IMR-90 (cell line): ENCODE measurements at regions of chr13 and their contacts with region 1.

Region 1: DNA sequence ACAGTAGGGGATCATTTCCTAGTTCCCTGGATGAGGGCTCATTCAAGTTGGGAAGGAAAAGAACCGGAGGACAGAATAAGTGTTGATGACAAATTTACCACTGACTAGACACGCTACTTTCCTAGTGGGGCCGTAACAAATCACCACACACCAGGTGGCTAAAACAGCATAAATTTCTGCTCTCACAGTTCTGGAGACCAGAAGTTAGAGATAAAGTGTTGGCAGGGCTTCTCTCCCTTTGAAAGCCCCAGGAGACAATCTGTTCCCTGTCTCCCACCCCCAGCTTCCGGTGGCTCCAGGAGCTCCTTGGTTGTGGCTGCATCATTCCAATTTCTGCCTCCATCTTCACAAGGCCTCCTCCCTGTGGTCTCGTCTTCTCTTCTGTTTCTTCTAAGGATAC is 65.4 kb upstream of the ARGLU1 start:
- DNase-seq: no peak
- ATAC-seq: no peak
- H3K4me3 ChIP-seq: no peak overlapping the region
- H3K27ac ChIP-seq: no peak overlapping the region
- H3K4me1 ChIP-seq: no peaks in the 10 kb centered on the region
- H3K27me3 ChIP-seq: peaks cover 6% of the 10 kb centered on the region
- CTCF ChIP-seq: no peak
- POLR2A ChIP-seq: no peak
- RAD21 ChIP-seq: no peak

Region 2: DNA sequence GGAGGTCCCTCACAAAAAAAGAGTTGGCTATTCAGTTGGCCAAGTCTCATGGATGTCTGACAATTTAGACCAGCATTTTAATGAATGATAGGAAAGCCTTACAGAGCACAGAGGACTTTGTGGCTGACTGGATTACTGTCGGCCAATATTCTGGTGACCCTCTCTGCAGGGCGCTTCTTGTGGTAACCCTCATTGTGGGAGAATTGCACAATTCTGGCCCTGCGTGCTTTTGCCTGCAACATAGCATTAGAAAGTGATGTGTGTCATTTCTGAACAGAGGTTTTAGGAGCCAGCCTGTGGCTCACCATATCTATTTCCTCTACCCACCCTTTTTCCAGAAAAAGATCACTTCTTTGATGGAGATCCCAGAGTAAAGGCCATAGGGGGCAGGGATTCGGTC is 169.2 kb before region 1 on chr13:
- CTCF ChIA-PET with region 1: no interaction called
- POLR2A ChIA-PET with region 1: no interaction called
- dilution Hi-C with region 1: no loop called
- in situ Hi-C with region 1: no loop called
- intact Hi-C with region 1: no loop called
- DNase-seq: no peak
- ATAC-seq: no peak
- H3K4me3 ChIP-seq: no peak overlapping the region
- H3K27ac ChIP-seq: no peak overlapping the region
- H3K4me1 ChIP-seq: no peaks in the 10 kb centered on the region
- H3K27me3 ChIP-seq: peaks cover 2% of the 10 kb centered on the region; the same call in 1 of the 2 replicates
- CTCF ChIP-seq: no peak
- POLR2A ChIP-seq: no peak
- RAD21 ChIP-seq: no peak

Region 3: DNA sequence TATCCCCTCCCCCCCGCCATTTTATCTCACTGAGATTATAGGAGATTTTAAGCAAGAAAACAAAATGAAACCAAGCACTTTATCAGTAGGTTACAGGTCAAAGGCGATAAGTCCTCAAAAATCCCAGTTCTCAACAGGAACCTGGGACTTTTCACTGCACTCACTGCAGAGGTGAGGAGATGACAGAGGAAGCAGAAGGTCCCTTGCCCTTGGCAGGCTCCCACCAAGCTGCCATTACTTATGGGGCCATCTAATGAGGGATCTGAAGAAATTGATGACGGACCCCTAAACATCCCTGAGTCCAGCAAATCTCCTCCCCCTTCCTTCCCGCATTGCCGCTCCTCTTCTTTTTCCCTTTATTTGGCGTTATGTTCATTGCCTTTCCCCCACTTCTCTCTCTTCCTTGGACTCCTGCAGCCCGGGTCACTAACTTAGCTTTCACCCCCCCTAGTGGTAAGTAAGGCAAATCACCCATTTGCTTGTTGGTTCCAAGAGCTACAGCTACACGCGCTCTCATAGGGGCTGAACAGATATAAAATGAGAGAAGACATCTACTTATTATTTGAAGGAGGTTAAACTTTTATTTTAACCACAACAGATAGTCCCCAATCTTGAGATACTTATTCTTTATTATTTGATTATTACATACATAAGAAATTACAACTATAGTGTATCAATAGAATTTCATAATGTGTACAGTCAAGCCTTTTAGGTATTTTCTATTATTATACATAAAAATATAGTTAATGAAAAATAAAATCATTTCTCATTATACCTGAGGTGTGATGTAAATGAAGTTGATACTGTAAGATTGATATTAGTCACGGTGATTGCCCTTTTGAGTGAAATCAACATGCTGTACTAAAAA is 13.4 kb before region 1 on chr13:
- CTCF ChIA-PET with region 1: interaction called, 11 read pairs
- POLR2A ChIA-PET with region 1: interaction called, 5 read pairs
- dilution Hi-C with region 1: no loop called
- in situ Hi-C with region 1: no loop called
- intact Hi-C with region 1: no loop called
- DNase-seq: peak; percentile 69
- ATAC-seq: peak; percentile 98
- H3K4me3 ChIP-seq: no peak overlapping the region
- H3K27ac ChIP-seq: no peak overlapping the region
- H3K4me1 ChIP-seq: no peaks in the 10 kb centered on the region
- H3K27me3 ChIP-seq: peaks cover 21% of the 10 kb centered on the region
- CTCF ChIP-seq: peak; percentile 82
- POLR2A ChIP-seq: no peak
- RAD21 ChIP-seq: peak; percentile 75

Region 4: DNA sequence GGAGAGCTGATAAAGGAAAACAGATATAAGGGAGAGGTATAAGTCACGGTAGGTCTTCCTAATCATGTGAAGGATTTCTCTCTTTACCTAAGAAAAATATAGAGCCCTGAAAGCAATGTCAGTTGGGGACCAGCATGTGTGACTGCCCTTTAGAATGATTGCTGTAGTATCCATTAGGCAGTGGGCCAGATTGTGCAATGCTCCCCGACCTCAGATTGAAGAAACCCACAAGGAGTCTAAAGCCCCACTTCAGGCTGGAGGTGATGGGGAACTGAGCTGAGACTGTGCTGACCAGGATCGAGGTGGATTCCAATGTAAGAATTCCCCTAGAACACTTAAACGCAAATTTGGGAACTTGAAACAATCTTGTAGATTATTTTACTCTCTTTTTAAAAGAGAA is 967.6 kb after region 1 on chr13:
- CTCF ChIA-PET with region 1: no interaction called
- POLR2A ChIA-PET with region 1: no interaction called
- dilution Hi-C with region 1: no loop called
- in situ Hi-C with region 1: no loop called
- intact Hi-C with region 1: no loop called
- DNase-seq: no peak
- ATAC-seq: no peak
- H3K4me3 ChIP-seq: no peak overlapping the region
- H3K27ac ChIP-seq: no peak overlapping the region
- H3K4me1 ChIP-seq: 0 out of 2 replicates have a peak, but pooled peaks cover 2% of the 10 kb centered on the region
- H3K27me3 ChIP-seq: no peaks in the 10 kb centered on the region
- CTCF ChIP-seq: no peak
- POLR2A ChIP-seq: no peak
- RAD21 ChIP-seq: no peak